HCT116 (cell line): ENCODE measurements at regions of chr7 and their contacts with region 1.

Region 1: GRCh38 chr7:144032985-144033709 is 15.6 kb upstream of the OR2A5 start:
- DNase-seq: no peak
- ATAC-seq: no peak
- H3K4me3 ChIP-seq: no peak overlapping the region
- H3K27ac ChIP-seq: no peak overlapping the region
- H3K4me1 ChIP-seq: peaks cover 0 to under 1% of the 10 kb centered on the region in 2 experiments; a peak in 1 of 4 replicates
- H3K27me3 ChIP-seq: no peaks in the 10 kb centered on the region
- CTCF ChIP-seq: no peak
- POLR2A ChIP-seq: no peak
- RAD21 ChIP-seq: no peak

Region 2: GRCh38 chr7:143992670-143993069 is 40.5 kb before region 1 on chr7:
- CTCF ChIA-PET with region 1: no interaction called
- POLR2A ChIA-PET with region 1: no interaction called
- RAD21 ChIA-PET with region 1: no interaction called
- intact Hi-C with region 1: loop called (anchors 5 kb)
- DNase-seq: no peak
- ATAC-seq: no peak
- H3K4me3 ChIP-seq: no peak overlapping the region
- H3K27ac ChIP-seq: no peak overlapping the region
- H3K4me1 ChIP-seq: no peaks in the 10 kb centered on the region
- H3K27me3 ChIP-seq: no peaks in the 10 kb centered on the region
- CTCF ChIP-seq: no peak
- POLR2A ChIP-seq: no peak
- RAD21 ChIP-seq: no peak

Region 3: GRCh38 chr7:144738708-144739314 is 705.7 kb after region 1 on chr7:
- CTCF ChIA-PET with region 1: no interaction called
- POLR2A ChIA-PET with region 1: no interaction called
- RAD21 ChIA-PET with region 1: no interaction called
- intact Hi-C with region 1: no loop called
- DNase-seq: peak; percentile 18
- ATAC-seq: peak; percentile 79
- H3K4me3 ChIP-seq: no peak overlapping the region
- H3K27ac ChIP-seq: no peak overlapping the region
- H3K4me1 ChIP-seq: no peaks in the 10 kb centered on the region
- H3K27me3 ChIP-seq: no peaks in the 10 kb centered on the region
- CTCF ChIP-seq: peak in 2 of 3 experiments; percentile 67 to 77; a peak in 4 of 6 replicates
- POLR2A ChIP-seq: no peak
- RAD21 ChIP-seq: peak; percentile 57; the same call in 1 of the 2 replicates